Psoas muscle (tissue), 8 donors: ENCODE measurements at regions of chr16 and their contacts with region 1.

Region 1: GRCh38 chr16:88194397-88195268 is 188.1 kb upstream of the ZNF469 start:
- DNase-seq: peak; percentile 41 to 80
- ATAC-seq: peak; percentile 80 to 92 (median 88)
- H3K4me3 ChIP-seq: peak overlapping the region; percentile 41
- H3K27ac ChIP-seq: peak overlapping the region; percentile 88
- H3K4me1 ChIP-seq: no peaks in the 10 kb centered on the region
- H3K27me3 ChIP-seq: no peaks in the 10 kb centered on the region
- CTCF ChIP-seq: no peak

Region 2: DNA sequence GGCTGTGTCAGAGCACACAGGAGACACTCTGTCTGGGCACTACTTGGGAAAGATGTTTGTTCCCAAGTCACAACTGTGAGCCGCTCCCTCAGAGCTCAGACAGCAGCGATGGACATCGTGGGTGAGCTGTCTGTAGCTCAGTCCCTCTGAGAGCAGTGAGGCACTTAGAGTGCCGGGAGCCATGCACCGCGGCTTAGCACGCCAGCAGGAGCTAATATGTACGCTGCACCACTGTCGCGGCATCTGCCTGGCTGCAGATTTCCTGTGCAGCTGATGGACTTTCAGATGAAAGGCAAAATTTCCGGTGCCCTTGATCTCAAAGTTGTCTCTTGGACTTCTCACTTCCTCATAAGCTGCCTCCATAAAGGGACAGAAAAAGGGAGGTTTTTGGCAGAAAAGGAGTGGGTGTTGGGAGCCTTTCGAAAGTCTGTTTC is 95.4 kb after region 1 on chr16:
- intact Hi-C with region 1: no loop called
- DNase-seq: peak in 1 of 2 donors; percentile 33
- ATAC-seq: no peak
- H3K4me3 ChIP-seq: no peak overlapping the region
- H3K27ac ChIP-seq: no peak overlapping the region
- H3K4me1 ChIP-seq: no peaks in the 10 kb centered on the region
- H3K27me3 ChIP-seq: peaks cover 0 to 38% (median 0%) of the 10 kb centered on the region in 3 donors
- CTCF ChIP-seq: no peak

Region 3: GRCh38 chr16:88306860-88307545 is 112.4 kb after region 1 on chr16:
- intact Hi-C with region 1: loop called in 1 of 2 experiments (anchors 5 kb)
- DNase-seq: peak; percentile 15 to 49
- ATAC-seq: peak; percentile 88 to 98 (median 95)
- H3K4me3 ChIP-seq: no peak overlapping the region
- H3K27ac ChIP-seq: peak overlapping the region; percentile 23
- H3K4me1 ChIP-seq: peaks cover 12% of the 10 kb centered on the region
- H3K27me3 ChIP-seq: peaks cover 0 to 6% (median 0%) of the 10 kb centered on the region in 3 donors
- CTCF ChIP-seq: no peak

Region 4: GRCh38 chr16:88317619-88317977 is 123.0 kb after region 1 on chr16:
- intact Hi-C with region 1: no loop called
- DNase-seq: peak in 1 of 2 donors; percentile 38
- ATAC-seq: peak in 2 of 4 donors; percentile 45 to 48
- H3K4me3 ChIP-seq: no peak overlapping the region
- H3K27ac ChIP-seq: no peak overlapping the region
- H3K4me1 ChIP-seq: no peaks in the 10 kb centered on the region
- H3K27me3 ChIP-seq: no peaks in the 10 kb centered on the region
- CTCF ChIP-seq: no peak

Region 5: GRCh38 chr16:88437373-88437964 is 242.8 kb after region 1 on chr16:
- intact Hi-C with region 1: loop called (anchors 1 to 5 kb)
- DNase-seq: peak in 1 of 2 donors; percentile 81
- ATAC-seq: peak; percentile 60 to 83 (median 72)
- H3K4me3 ChIP-seq: no peak overlapping the region
- H3K27ac ChIP-seq: no peak overlapping the region
- H3K4me1 ChIP-seq: no peaks in the 10 kb centered on the region
- H3K27me3 ChIP-seq: peaks cover 0 to 17% (median 2%) of the 10 kb centered on the region in 3 donors
- CTCF ChIP-seq: peak; percentile 82

Region 6: GRCh38 chr16:88527186-88527936 is 332.7 kb after region 1 on chr16:
- intact Hi-C with region 1: loop called in 1 of 2 experiments (anchors 10 kb)
- DNase-seq: peak; percentile 71 to 77
- ATAC-seq: peak; percentile 64 to 79 (median 72)
- H3K4me3 ChIP-seq: peak overlapping the region; percentile 7
- H3K27ac ChIP-seq: no peak overlapping the region
- H3K4me1 ChIP-seq: peaks cover 69% of the 10 kb centered on the region
- H3K27me3 ChIP-seq: peaks cover 0 to 17% (median 5%) of the 10 kb centered on the region in 3 donors
- CTCF ChIP-seq: peak; percentile 81

Region 7: DNA sequence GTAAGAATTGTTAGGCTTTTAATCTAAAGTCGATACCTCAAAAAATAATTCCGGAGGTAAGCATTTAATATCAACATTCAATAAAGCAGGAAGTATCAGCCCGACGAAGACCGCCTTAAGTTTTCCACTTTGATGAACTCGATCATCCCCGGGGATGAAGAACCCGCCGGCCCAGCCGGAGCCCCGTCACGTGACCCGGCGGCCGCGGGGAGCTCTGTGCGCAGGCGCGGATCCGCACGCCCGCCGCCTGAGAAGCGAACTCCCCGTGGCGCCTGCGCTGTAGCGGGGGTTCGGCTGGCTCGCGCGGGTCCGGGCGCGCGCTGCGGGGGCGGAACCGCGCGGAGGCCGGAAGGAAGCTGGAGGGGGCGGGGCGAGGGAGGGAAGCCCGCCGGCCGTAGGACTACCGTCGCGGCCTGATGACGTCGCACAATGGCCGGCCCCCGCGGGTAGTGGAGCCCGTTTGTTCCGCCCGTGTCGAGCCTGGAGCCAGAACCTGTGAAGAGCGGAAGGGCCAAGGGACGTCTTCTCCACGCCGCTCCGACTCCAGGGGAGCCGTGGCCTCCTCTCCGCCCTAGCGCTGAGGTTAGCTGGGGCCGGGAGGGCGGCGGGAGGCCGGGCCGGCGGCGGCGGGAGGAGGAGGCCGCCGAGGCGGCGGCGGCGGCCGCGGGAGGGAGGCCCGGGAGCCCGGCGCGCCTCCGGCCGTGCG is 375.5 kb after region 1 on chr16 and contains the start of gene ZC3H18:
- intact Hi-C with region 1: loop called in 1 of 2 experiments (anchors 10 kb)
- DNase-seq: peak; percentile 98 to 99
- ATAC-seq: peak; percentile 99 to 100 (median 99)
- H3K4me3 ChIP-seq: peak within 1 kb of the TSS; percentile 72
- H3K27ac ChIP-seq: peak within 1 kb of the TSS; percentile 85
- H3K4me1 ChIP-seq: peaks cover 17% of the 10 kb centered on the region
- H3K27me3 ChIP-seq: no peaks in the 10 kb centered on the region
- CTCF ChIP-seq: no peak
- total RNA-seq, gene ZC3H18: 24.8 to 30.5 (median 26.9) TPM